ENCODE measurements at regions of chr2 and their contacts with region 1.

Region 1: GRCh38 chr2:8681786-8682692 is at the start of gene ID2:
- DNase-seq: peak; percentile 98 to 99 (median 98)
- H3K4me3 ChIP-seq: peak within 1 kb of the TSS; percentile 82 to 85
- H3K4me3 Mint-ChIP-seq: peak within 1 kb of the TSS; percentile 94 to 100 (median 99)
- H3K27ac ChIP-seq: peak within 1 kb of the TSS; percentile 74
- H3K27ac Mint-ChIP-seq: peak within 1 kb of the TSS; percentile 90 to 97 (median 96)
- H3K4me1 ChIP-seq: peaks cover 41% of the 10 kb centered on the region
- H3K4me1 Mint-ChIP-seq: peaks cover 32 to 61% (median 37%) of the 10 kb centered on the region in 4 donors
- H3K27me3 ChIP-seq: no peaks in the 10 kb centered on the region
- H3K27me3 Mint-ChIP-seq: peaks cover 9 to 18% of the 10 kb centered on the region in 2 donors
- total RNA-seq, gene ID2: 50.8 to 56.4 TPM

Region 2: DNA sequence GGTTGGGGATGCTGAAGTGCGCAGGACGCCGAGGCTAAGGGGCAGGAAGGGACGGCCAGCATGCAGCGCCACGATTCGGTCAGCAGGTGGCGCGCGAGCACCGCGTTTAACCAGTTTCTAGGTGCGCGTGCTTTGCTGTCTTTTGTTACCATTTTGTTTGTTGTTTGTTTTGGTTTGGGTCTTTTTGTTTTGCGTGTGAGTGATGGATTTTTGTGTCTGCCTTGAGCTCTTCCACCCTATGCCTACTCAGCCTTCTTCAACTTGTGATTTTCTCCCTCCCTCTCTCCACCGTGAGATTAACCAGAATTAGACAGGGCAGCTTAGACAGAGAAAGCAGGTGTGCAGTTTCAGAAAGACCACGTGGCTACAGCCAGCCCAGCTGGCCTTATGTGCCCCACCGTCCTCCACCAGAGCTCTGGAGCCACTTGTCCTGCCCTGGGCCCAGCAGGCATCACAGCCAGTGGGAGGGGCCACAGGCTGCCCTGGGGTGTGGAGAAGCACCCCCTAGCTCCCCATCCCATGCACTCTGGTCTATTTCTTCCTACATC is 1584.6 kb before region 1 on chr2:
- CTCF ChIA-PET with region 1: interaction called, 5 read pairs
- POLR2A ChIA-PET with region 1: interaction called, 3 read pairs
- intact Hi-C with region 1: loop called (anchors 1 kb)
- DNase-seq: peak; percentile 65 to 72 (median 66)
- H3K4me3 ChIP-seq: peak overlapping the region in 1 of 2 donors; percentile 24
- H3K4me3 Mint-ChIP-seq: peak overlapping the region; percentile 69 to 87 (median 77)
- H3K27ac ChIP-seq: no peak overlapping the region
- H3K27ac Mint-ChIP-seq: peak overlapping the region in 5 of 7 donors; percentile 9 to 64 (median 26)
- H3K4me1 ChIP-seq: peaks cover 9% of the 10 kb centered on the region
- H3K4me1 Mint-ChIP-seq: peaks cover 3 to 9% (median 5%) of the 10 kb centered on the region in 4 donors
- H3K27me3 ChIP-seq: no peaks in the 10 kb centered on the region
- H3K27me3 Mint-ChIP-seq: peaks cover 0 to 1% of the 10 kb centered on the region in 2 donors

Region 3: GRCh38 chr2:7672027-7672684 is 1009.9 kb before region 1 on chr2:
- CTCF ChIA-PET with region 1: interaction called, 6 read pairs
- POLR2A ChIA-PET with region 1: interaction called, 3 read pairs
- intact Hi-C with region 1: loop called (anchors 2 kb)
- DNase-seq: peak in 4 of 5 donors; percentile 37 to 43 (median 43)
- H3K4me3 ChIP-seq: no peak overlapping the region
- H3K4me3 Mint-ChIP-seq: peak overlapping the region; percentile 3 to 82 (median 68)
- H3K27ac ChIP-seq: no peak overlapping the region
- H3K27ac Mint-ChIP-seq: peak overlapping the region; percentile 75 to 93 (median 89)
- H3K4me1 ChIP-seq: peaks cover 19% of the 10 kb centered on the region
- H3K4me1 Mint-ChIP-seq: peaks cover 19 to 36% (median 25%) of the 10 kb centered on the region in 4 donors
- H3K27me3 ChIP-seq: no peaks in the 10 kb centered on the region
- H3K27me3 Mint-ChIP-seq: no peaks in the 10 kb centered on the region

Region 4: GRCh38 chr2:8004250-8004681 is 677.8 kb before region 1 on chr2:
- CTCF ChIA-PET with region 1: no interaction called
- POLR2A ChIA-PET with region 1: no interaction called
- intact Hi-C with region 1: loop called (anchors 2 kb)
- DNase-seq: no peak
- H3K4me3 ChIP-seq: no peak overlapping the region
- H3K4me3 Mint-ChIP-seq: no peak overlapping the region
- H3K27ac ChIP-seq: no peak overlapping the region
- H3K27ac Mint-ChIP-seq: no peak overlapping the region
- H3K4me1 ChIP-seq: no peaks in the 10 kb centered on the region
- H3K4me1 Mint-ChIP-seq: no peaks in the 10 kb centered on the region
- H3K27me3 ChIP-seq: no peaks in the 10 kb centered on the region
- H3K27me3 Mint-ChIP-seq: no peaks in the 10 kb centered on the region

Region 5: GRCh38 chr2:8472545-8473323 is 209.3 kb before region 1 on chr2:
- CTCF ChIA-PET with region 1: interaction called, 9 read pairs
- POLR2A ChIA-PET with region 1: interaction called, 81 read pairs
- intact Hi-C with region 1: no loop called
- DNase-seq: peak in 1 of 5 donors; percentile 20
- H3K4me3 ChIP-seq: no peak overlapping the region
- H3K4me3 Mint-ChIP-seq: peak overlapping the region in 7 of 8 donors; percentile 59 to 75 (median 70)
- H3K27ac ChIP-seq: peak overlapping the region; percentile 38
- H3K27ac Mint-ChIP-seq: peak overlapping the region; percentile 80 to 98 (median 91)
- H3K4me1 ChIP-seq: peaks cover 81% of the 10 kb centered on the region
- H3K4me1 Mint-ChIP-seq: peaks cover 53 to 89% (median 78%) of the 10 kb centered on the region in 4 donors
- H3K27me3 ChIP-seq: no peaks in the 10 kb centered on the region
- H3K27me3 Mint-ChIP-seq: no peaks in the 10 kb centered on the region

Region 6: DNA sequence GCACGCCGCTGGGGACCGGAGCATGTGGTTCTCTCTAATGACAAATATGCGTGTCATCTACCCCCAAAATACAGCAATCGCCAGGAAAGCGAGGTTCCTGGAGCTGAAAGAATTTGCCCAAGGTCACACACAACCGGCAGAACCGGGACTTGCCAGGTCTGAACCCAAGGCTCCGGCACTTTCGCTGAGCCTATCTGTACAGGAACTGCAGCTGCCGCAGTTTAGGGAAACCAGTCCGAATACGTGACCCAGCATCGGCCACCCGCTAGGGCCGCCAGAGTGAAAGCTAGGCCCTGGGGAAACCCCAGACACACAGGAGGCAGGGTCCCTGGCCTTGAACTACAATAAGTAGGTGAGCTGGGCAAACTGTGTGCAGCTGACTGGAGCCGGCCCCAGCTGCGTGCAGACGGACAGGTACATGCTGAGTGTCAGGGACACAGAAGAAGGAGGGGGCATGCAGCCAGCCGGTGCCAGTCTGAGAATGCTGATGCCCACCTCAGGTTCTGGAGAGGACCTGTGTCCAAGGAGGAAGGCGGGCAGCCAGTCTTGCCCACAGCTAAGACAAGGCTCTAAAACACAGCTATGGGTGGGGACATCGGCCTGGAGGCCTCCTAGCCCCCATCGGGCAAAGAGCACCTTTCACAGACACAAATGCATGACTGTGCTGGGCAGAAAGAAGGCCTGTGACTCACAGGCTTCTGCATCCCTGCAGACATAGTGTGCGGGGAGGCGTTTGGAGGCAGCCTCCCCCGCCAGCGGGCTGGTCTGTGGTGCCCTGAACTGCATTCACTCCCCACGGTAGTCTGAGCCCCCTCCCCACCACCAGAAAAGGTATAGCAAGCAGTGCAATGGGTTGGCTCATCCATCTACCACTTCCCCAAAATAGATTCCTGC is 107.6 kb before region 1 on chr2:
- CTCF ChIA-PET with region 1: no interaction called
- POLR2A ChIA-PET with region 1: interaction called, 8 read pairs
- intact Hi-C with region 1: loop called (anchors 10 kb)
- DNase-seq: no peak
- H3K4me3 ChIP-seq: no peak overlapping the region
- H3K4me3 Mint-ChIP-seq: peak overlapping the region in 6 of 8 donors; percentile 5 to 84 (median 59)
- H3K27ac ChIP-seq: no peak overlapping the region
- H3K27ac Mint-ChIP-seq: peak overlapping the region in 3 of 7 donors; percentile 30 to 68 (median 42)
- H3K4me1 ChIP-seq: peaks cover 27% of the 10 kb centered on the region
- H3K4me1 Mint-ChIP-seq: peaks cover 24 to 38% (median 31%) of the 10 kb centered on the region in 4 donors
- H3K27me3 ChIP-seq: no peaks in the 10 kb centered on the region
- H3K27me3 Mint-ChIP-seq: peaks cover 0 to 2% of the 10 kb centered on the region in 2 donors

Measured in CD4-positive, alpha-beta memory T cell (primary cell).